ENCODE measurements at regions of chr15 and their contacts with region 1.

Region 1: GRCh38 chr15:90071208-90071807 is 31.0 kb downstream of the IDH2 start:
- DNase-seq: peak in 2 of 3 donors; percentile 78 to 95
- ATAC-seq: peak; percentile 79
- H3K4me3 ChIP-seq: no peak overlapping the region
- H3K4me1 ChIP-seq: no peaks in the 10 kb centered on the region
- CTCF ChIP-seq: peak; percentile 51

Region 2: DNA sequence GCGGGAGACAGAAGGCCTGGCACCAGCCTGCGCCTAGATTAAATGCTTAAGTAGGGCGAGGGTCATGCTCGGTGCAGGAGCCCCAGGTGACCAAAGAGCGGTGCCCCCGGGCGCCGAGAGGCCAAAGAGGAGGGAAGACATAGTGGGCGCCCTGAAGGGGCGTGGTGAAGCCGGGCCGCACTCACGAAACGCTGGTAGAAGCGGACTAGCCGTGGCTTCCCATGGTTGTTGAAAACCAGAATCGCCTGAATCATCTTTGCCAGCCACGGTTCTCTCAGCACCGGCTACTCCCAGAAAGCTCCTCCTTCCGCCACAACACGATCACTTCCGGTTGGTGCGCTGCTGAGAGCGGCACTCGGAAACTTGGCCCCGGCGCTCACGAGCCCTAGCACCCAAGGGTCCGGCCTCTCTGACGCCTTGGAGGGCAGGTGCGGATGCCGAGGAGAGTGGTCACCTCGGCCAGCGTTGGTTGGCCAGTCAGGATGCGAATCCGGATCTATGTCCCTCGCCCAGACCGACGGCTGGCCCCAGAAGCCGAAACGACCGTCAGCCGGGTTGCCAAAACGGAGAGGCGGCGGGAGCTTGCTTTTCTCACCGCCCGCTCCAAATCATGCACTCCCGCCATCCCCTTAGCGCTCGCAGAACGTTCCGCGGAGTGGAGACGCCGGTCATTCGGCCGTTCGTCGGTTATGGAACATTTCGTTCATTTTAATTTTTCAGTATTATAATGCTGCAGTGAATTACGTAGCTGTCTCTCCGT is 177.4 kb before region 1 on chr15 and contains the start of gene AP3S2:
- intact Hi-C with region 1: loop called in 1 of 2 experiments (anchors 10 kb)
- DNase-seq: peak; percentile 90 to 95 (median 94)
- ATAC-seq: peak; percentile 98
- H3K4me3 ChIP-seq: peak within 1 kb of the TSS; percentile 60
- H3K4me1 ChIP-seq: peaks cover 13% of the 10 kb centered on the region
- CTCF ChIP-seq: no peak
- total RNA-seq, gene AP3S2: 56.1 to 93.4 (median 65.1) TPM

Region 3: GRCh38 chr15:89907289-89907688 is 164.0 kb before region 1 on chr15:
- intact Hi-C with region 1: loop called in 1 of 2 experiments (anchors 10 kb)
- DNase-seq: no peak
- ATAC-seq: no peak
- H3K4me3 ChIP-seq: no peak overlapping the region
- H3K4me1 ChIP-seq: peaks cover 10% of the 10 kb centered on the region
- CTCF ChIP-seq: no peak

Region 4: DNA sequence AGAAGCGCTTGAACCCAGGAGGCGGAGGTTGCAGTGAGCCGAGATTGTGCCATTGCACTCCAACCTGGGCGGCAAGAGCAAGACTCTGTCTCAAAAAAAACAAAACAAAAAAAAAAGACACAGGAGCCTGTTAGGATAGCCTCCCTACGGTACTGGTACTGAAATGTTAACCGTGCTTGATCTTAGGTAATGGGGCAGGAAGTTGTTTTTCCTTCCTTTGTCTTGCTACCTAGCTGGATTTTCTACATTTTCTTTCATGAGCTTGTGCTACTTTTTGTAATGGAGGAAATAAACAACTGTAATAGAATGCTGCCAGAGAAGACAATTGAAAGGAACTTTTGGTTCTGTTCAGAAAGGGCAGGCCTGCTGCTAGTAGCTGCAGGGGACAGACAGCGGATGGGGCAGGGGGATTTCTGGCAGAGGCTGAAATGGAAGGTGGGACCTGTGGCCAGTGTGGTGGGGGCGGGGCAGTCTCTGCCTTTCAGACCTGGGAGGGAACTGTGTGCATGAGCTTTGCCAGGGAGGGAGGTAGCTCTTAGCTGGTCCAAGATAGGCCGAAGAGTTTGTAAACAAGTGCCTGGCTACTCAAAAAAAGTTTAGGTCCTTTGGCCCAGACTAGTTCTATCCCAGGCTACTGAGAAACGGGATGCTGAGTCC is 80.8 kb after region 1 on chr15:
- intact Hi-C with region 1: no loop called
- DNase-seq: no peak
- ATAC-seq: no peak
- H3K4me3 ChIP-seq: no peak overlapping the region
- H3K4me1 ChIP-seq: peaks cover 14% of the 10 kb centered on the region
- CTCF ChIP-seq: no peak

Measured in mucosa of descending colon (tissue), 3 donors.